ENCODE measurements at regions of chr6 and their contacts with region 1.

Region 1: GRCh38 chr6:41920921-41921711 is at the starts of genes BYSL and MED20:
- DNase-seq: peak; percentile 95
- ATAC-seq: peak; percentile 90
- H3K4me3 Mint-ChIP-seq: peak within 1 kb of the TSS; percentile 98
- H3K27ac Mint-ChIP-seq: peak within 1 kb of the TSS; percentile 98
- H3K4me1 Mint-ChIP-seq: peaks cover 52% of the 10 kb centered on the region
- H3K27me3 Mint-ChIP-seq: no peaks in the 10 kb centered on the region
- total RNA-seq, gene BYSL: 39.4 to 43.1 TPM
- total RNA-seq, gene MED20: 20.6 to 22.3 TPM

Region 2: DNA sequence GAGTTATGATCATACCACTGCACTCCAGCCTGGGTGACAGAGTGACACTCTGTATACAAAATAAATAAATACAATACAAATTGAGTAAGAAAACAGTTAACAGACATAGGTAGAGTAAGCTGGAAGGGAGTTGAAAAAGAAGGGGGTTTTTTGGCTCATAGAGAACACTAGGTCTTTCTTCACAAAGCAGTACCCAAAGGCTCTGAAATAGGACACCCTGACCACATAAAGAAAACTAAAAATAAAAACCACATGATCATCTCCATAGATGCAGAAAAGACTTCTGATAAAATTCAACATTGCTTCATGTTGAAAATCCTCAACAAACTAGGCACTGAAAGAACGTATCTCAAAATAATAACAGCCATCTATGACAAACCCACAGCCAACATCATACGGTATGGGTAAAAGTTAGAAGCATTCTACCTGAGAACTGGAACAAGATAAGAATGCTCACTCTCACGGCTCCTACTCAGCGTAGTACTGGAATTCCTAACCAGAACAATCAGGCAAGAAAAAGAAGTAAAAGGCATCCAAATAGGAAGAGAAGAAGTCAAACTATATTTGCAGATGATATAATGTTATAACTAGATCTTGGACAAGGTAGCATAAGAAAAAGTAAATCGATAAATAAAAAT is 85.0 kb before region 1 on chr6:
- CTCF ChIA-PET with region 1: no interaction called
- POLR2A ChIA-PET with region 1: no interaction called
- DNase-seq: no peak
- ATAC-seq: no peak
- H3K4me3 Mint-ChIP-seq: no peak overlapping the region
- H3K27ac Mint-ChIP-seq: no peak overlapping the region
- H3K4me1 Mint-ChIP-seq: peaks cover 4% of the 10 kb centered on the region
- H3K27me3 Mint-ChIP-seq: no peaks in the 10 kb centered on the region

Region 3: GRCh38 chr6:41895300-41896233 is 25.5 kb before region 1 on chr6 and contains the start of gene USP49:
- CTCF ChIA-PET with region 1: interaction called, 11 read pairs
- POLR2A ChIA-PET with region 1: interaction called, 9 read pairs
- DNase-seq: peak; percentile 94
- ATAC-seq: peak; percentile 97
- H3K4me3 Mint-ChIP-seq: no peak within 1 kb of the TSS
- H3K27ac Mint-ChIP-seq: peak within 1 kb of the TSS; percentile 78
- H3K4me1 Mint-ChIP-seq: peaks cover 17% of the 10 kb centered on the region
- H3K27me3 Mint-ChIP-seq: no peaks in the 10 kb centered on the region
- total RNA-seq, gene USP49: 6.2 to 7.8 TPM

Region 4: GRCh38 chr6:41901882-41902519 is 19.1 kb before region 1 on chr6:
- CTCF ChIA-PET with region 1: interaction called, 28 read pairs
- POLR2A ChIA-PET with region 1: interaction called, 4 read pairs
- DNase-seq: peak; percentile 72
- ATAC-seq: peak; percentile 73
- H3K4me3 Mint-ChIP-seq: no peak overlapping the region
- H3K27ac Mint-ChIP-seq: no peak overlapping the region
- H3K4me1 Mint-ChIP-seq: peaks cover 24% of the 10 kb centered on the region
- H3K27me3 Mint-ChIP-seq: no peaks in the 10 kb centered on the region